ENCODE measurements at regions of chr11 and their contacts with region 1.

Region 1: GRCh38 chr11:17412488-17413180 is 24.2 kb upstream of the KCNJ11 start:
- DNase-seq: no peak
- ATAC-seq: no peak
- H3K4me3 ChIP-seq: no peak overlapping the region
- H3K27ac ChIP-seq: no peak overlapping the region
- H3K4me1 ChIP-seq: peaks cover 24% of the 10 kb centered on the region
- H3K27me3 ChIP-seq: no peaks in the 10 kb centered on the region
- CTCF ChIP-seq: no peak

Region 2: GRCh38 chr11:17468122-17468521 is 55.5 kb after region 1 on chr11:
- intact Hi-C with region 1: loop called in 1 of 2 experiments (anchors 5 kb)
- DNase-seq: no peak
- ATAC-seq: peak in 2 of 4 donors; percentile 22 to 25
- H3K4me3 ChIP-seq: no peak overlapping the region
- H3K27ac ChIP-seq: no peak overlapping the region
- H3K4me1 ChIP-seq: no peaks in the 10 kb centered on the region
- H3K27me3 ChIP-seq: no peaks in the 10 kb centered on the region
- CTCF ChIP-seq: no peak